Right cardiac atrium (tissue), 5 donors: ENCODE measurements at regions of chr10 and their contacts with region 1.

Region 1: GRCh38 chr10:86399879-86400704 is 33.5 kb upstream of the GRID1 start:
- DNase-seq: peak; percentile 96 to 98 (median 98)
- ATAC-seq: peak; percentile 96
- H3K4me3 ChIP-seq: peak overlapping the region; percentile 53
- H3K27ac ChIP-seq: peak overlapping the region; percentile 46
- H3K4me1 ChIP-seq: no peaks in the 10 kb centered on the region
- H3K27me3 ChIP-seq: no peaks in the 10 kb centered on the region

Region 2: DNA sequence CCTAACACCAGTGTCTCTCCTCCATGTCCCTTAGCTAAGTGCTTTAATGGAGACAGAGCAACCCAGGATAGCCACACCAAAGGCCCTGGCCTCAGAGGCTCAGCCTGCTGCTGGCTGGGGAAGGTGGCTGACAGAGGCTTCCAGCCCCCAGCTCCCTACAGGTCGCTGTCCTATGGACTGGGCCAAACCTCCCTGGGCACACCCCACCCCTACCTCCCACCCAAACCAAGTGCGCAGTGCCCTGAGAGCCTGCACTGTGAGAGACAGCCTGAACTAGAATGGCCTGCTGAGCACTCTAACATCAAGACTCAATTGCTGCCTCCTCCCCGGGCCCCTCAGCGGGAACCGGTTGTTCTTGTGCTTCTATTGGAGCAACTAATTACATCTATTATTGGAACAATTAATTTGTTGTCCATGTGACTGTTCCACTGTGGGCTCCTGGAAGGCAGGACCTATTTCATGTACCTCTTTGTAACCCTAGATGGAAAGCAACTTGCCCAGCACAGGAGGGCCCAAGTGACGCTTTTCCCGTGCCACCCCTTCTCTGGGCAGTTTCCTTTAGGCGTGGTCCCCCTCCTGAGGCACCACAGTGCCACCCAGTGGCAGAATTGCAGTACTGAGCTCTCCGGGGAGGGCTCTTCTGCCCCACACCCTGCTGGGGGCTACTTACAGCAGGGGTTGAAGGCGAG is 185.1 kb after region 1 on chr10:
- intact Hi-C with region 1: loop called (anchors 2 to 5 kb)
- DNase-seq: peak; percentile 69 to 87 (median 84)
- ATAC-seq: peak; percentile 91 to 96
- H3K4me3 ChIP-seq: no peak overlapping the region
- H3K27ac ChIP-seq: no peak overlapping the region
- H3K4me1 ChIP-seq: no peaks in the 10 kb centered on the region
- H3K27me3 ChIP-seq: no peaks in the 10 kb centered on the region